Right ventricle myocardium inferior (tissue), 1 donor: ENCODE measurements at regions of chr2 and their contacts with region 1.

Region 1: DNA sequence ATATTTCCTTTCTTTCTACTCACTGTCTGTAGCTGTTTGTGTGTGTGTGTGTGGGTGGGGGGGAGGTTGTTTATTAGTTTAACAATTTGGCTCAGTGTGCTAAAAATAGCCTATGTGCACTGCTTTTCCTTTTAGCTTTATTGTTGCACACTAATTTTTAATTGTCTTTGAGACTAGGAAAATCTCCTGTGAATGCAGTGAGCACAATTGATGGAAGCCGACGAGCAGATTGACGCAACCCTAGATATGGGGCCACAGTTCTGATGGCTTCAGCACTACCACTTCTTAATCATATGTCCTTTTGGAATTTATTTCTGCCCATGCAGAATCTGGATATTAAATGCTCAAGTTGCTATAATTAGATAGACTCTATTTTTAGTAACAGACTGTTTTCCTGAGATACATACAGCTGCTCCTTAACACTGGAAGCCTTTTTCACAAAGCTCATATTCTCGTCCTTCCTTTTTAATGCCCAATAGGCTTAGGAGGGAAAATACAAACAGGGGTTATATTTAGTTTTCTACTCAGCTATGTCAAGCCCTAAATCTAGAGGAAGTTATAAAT is 109.1 kb downstream of the IRS1 start:
- DNase-seq: no peak
- ATAC-seq: peak; percentile 46

Region 2: DNA sequence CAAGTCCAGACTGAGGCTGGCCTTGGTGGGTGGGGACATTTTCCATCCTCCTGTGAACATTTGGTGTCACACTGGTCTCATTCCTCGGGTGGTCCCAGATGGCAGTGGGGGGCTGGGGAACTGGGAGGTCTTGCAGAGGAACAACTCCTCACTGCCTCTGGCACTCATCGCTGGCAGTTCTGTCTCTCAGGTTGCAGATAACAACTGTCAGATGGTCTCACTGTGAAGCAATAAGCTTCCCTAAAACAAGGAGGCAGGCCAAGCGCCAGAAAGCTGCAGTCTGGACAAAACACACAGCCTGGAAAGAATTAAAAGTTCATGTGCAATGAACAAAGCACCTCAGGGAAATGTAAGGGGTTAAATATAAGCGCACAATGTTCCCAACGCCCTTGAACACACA is 31.0 kb after region 1 on chr2:
- intact Hi-C with region 1: loop called (anchors 2 kb)
- DNase-seq: peak; percentile 64
- ATAC-seq: no peak

Region 3: DNA sequence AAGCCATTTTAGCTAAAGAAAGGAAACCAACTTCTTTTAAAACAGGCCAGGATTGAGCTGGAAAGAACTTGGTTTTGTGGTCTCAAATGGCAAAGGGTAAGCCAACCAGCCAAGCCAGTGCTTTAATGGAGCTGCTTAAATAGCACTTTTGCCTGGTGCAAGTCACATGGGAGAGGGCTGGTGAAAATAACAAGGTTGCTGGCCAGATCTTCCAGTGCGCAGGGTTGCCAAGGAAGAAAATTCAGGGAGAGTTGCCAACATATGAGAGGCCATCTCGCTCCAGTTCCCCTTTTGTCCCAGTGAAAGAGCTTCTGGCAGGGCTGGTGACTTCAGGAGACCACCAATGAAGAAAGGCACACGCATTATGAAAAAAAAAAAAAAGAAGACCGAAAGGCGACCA is 51.8 kb after region 1 on chr2:
- intact Hi-C with region 1: loop called (anchors 5 kb)
- DNase-seq: peak; percentile 64
- ATAC-seq: peak; percentile 92